Activated CD4-positive, alpha-beta memory T cell treated with anti-CD3 and anti-CD28 coated beads for 36 hours (primary cell): ENCODE measurements at regions of chr1 and their contacts with region 1.

Region 1: DNA sequence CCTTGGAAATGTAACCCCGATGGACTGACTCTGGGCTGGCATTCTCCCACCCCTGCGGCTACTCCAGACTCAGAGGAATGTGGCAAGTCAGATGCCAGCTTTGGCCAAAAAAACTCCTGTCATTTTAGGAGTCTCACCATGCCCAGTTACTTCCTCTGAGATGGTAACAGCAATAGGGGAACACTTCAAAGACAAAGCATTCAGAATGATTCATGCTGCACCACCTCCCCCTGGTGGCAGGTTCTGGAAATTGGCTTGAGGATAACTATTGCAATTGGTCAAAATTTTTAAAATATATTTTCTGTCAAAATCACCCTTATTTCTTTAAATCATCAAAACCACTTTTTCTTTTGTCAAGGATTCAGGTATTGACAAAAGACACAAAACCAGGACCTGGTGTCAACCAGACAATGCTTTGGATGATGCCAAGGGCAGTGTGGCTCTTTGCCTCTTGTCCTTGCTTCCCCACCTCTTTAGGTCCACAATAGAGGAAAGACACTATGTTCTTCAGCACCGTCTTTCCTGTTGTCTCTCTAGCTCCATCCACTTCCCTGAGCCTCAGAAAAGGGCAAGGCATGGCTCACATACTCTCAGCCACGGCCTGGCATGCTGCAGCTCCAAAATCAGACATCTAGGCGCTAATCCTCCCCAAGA is 9.9 kb upstream of the CDCA8 start:
- DNase-seq: peak; percentile 84
- H3K4me3 Mint-ChIP-seq: no peak overlapping the region
- H3K27ac Mint-ChIP-seq: no peak overlapping the region
- H3K4me1 Mint-ChIP-seq: peaks cover 2% of the 10 kb centered on the region
- H3K27me3 Mint-ChIP-seq: no peaks in the 10 kb centered on the region

Region 2: GRCh38 chr1:37449936-37450335 is 232.5 kb before region 1 on chr1:
- CTCF ChIA-PET with region 1: interaction called, 6 read pairs
- POLR2A ChIA-PET with region 1: no interaction called
- intact Hi-C with region 1: loop called (anchors 1 kb)
- DNase-seq: peak; percentile 58
- H3K4me3 Mint-ChIP-seq: no peak overlapping the region
- H3K27ac Mint-ChIP-seq: peak overlapping the region; percentile 18
- H3K4me1 Mint-ChIP-seq: peaks cover 8% of the 10 kb centered on the region
- H3K27me3 Mint-ChIP-seq: peaks cover 9% of the 10 kb centered on the region

Region 3: DNA sequence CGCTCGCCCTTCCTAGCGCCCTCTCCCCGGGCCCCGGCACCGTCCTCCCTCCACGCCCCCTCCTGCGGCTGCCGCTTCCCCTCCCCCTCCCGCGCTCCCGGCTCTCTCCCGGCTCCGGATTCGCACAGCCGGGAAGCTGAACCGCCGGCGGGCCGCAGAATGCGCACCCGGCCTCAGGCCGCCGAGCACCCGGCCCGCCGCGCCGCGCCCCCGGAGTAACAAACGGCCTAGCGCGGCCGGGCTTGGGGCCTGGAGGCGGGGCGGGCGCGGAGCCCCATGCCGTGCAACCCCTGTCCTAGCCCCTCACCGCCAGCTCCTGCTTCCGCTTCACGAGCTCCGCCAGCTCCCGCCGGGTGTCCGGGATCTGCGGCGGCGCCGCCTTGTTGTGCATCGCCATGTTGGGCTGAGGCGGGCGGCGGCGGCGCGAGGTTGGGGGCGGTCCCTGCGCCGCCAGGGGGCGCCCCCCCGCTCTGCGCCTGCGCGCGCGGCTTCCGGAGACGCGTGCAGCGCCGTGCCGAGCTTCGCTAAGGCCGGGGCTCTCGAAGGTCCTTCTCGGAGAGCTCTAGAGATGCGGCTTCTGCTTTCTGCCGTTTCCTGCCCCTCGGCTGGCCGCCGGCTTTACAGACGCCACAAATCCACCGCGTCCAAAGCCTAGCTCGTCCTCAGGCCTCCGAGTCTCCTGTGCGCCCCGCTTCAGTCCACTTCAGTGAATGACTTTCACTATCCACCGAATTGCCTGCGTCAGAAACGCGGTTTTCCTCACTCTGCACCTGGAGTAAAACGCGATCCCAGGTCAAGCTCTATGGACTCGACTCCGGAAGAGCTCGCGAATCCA is 167.9 kb before region 1 on chr1 and contains the start of gene MEAF6:
- CTCF ChIA-PET with region 1: interaction called, 3 read pairs
- POLR2A ChIA-PET with region 1: no interaction called
- intact Hi-C with region 1: loop called (anchors 2 kb)
- DNase-seq: peak; percentile 87
- H3K4me3 Mint-ChIP-seq: peak within 1 kb of the TSS; percentile 98
- H3K27ac Mint-ChIP-seq: peak within 1 kb of the TSS; percentile 94
- H3K4me1 Mint-ChIP-seq: peaks cover 49% of the 10 kb centered on the region
- H3K27me3 Mint-ChIP-seq: no peaks in the 10 kb centered on the region
- total RNA-seq, gene MEAF6: 89.6 to 89.7 TPM

Region 4: DNA sequence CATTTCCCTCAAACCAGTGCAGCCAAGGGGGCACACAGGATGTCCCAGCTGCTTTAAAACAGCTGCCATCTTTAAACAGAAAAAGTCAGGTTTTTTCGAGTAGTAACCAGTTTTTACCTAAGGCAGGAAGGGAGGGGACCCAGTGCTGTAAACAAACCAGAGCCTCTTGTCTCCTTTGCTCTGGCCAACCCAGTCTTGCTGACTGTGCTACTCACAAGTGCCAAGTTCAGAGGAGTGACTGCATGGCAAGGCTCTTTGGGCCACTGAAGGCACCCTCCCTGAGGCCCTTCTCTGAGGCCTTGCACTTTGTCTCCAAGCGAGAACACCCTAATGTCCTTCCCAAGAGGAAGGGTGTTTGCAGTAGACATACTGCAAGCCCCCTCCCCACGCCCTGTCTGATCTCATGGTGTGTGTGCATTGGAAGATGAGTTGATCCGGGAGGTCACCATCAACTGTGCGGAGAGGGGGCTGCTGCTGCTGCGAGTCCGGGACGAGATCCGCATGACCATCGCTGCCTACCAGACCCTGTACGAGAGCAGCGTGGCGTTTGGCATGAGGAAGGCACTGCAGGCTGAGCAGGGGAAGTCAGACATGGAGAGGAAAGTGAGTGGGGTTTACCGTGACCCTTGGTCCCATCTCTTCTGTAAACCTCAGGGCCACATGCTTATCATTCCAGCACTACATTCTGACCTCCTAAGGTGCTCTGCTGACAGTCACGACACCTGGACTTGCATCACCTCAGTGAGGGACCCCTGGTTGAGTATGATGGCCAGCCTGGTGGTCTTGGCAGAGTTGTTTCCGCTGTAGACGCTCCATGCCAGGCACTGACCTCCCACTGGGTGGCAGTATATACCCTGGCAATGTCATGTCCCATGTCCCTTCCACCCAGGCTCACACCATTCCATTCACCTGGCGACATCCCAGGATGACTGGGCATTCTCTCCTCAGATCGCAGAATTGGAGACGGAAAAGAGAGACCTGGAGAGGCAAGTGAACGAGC is 121.0 kb before region 1 on chr1:
- CTCF ChIA-PET with region 1: interaction called, 35 read pairs
- POLR2A ChIA-PET with region 1: no interaction called
- intact Hi-C with region 1: loop called (anchors 1 kb)
- DNase-seq: peak; percentile 52
- H3K4me3 Mint-ChIP-seq: no peak overlapping the region
- H3K27ac Mint-ChIP-seq: no peak overlapping the region
- H3K4me1 Mint-ChIP-seq: peaks cover 8% of the 10 kb centered on the region
- H3K27me3 Mint-ChIP-seq: no peaks in the 10 kb centered on the region

Region 5: DNA sequence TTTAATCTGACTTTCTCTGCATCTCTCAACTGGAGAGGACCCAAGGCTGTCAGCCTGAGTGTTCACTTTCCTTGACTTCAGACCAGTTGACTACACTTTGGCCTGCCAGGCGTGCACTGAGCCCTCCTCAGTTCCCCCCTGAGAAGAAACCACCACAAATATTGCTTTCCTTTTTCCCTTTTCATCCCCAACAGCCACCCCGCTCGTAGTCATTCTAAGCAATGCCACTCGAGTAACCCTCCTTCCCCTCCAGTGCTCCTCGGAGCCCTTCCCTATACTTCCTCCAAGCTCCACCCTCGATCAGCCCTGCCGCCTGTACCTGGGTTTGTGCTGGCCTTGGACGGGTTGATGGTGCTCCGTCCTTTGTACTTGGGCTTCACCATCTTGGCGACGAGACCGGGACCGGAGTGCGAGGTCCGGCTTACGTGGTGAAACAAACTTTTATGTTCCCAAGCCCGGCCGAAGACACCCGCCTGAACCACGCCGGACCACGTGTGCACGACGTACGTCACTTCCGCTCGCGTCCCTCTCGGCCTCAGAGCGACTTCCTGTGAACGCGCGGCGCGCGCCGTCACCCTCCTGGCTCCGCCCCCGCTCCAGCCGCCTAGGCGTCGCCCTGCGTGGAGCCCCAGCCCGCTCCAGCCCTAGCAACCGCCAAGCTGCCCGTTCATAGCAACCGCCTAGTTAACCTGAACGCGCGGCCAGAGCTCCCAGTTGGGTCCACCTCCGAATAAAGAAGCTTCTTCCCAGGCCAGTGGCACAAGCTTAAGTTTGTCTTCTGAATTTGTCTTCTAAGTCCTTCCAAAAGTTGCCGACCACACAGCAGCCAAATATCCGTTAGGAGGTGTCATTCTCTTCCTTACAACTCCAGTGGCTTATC is 86.8 kb before region 1 on chr1 and contains the start of gene GNL2:
- CTCF ChIA-PET with region 1: interaction called, 220 read pairs
- POLR2A ChIA-PET with region 1: no interaction called
- intact Hi-C with region 1: loop called (anchors 2 kb)
- DNase-seq: peak; percentile 98
- H3K4me3 Mint-ChIP-seq: peak within 1 kb of the TSS; percentile 100
- H3K27ac Mint-ChIP-seq: peak within 1 kb of the TSS; percentile 98
- H3K4me1 Mint-ChIP-seq: peaks cover 37% of the 10 kb centered on the region
- H3K27me3 Mint-ChIP-seq: no peaks in the 10 kb centered on the region
- total RNA-seq, gene GNL2: 70.7 to 71.2 TPM

Region 6: GRCh38 chr1:37602750-37603694 is 79.4 kb before region 1 on chr1:
- CTCF ChIA-PET with region 1: interaction called, 220 read pairs
- POLR2A ChIA-PET with region 1: no interaction called
- intact Hi-C with region 1: loop called (anchors 1 kb)
- DNase-seq: peak; percentile 46
- H3K4me3 Mint-ChIP-seq: no peak overlapping the region
- H3K27ac Mint-ChIP-seq: no peak overlapping the region
- H3K4me1 Mint-ChIP-seq: no peaks in the 10 kb centered on the region
- H3K27me3 Mint-ChIP-seq: no peaks in the 10 kb centered on the region